ENCODE measurements at regions of chr3 and their contacts with region 1.

Region 1: GRCh38 chr3:122942937-122943827 is 84.4 kb downstream of the SEMA5B start:
- DNase-seq: peak; percentile 74 to 78 (median 77)
- ATAC-seq: peak; percentile 74 to 91 (median 86)
- H3K4me3 ChIP-seq: no peak overlapping the region
- H3K27ac ChIP-seq: peak overlapping the region in 4 of 12 donors; percentile 4 to 42 (median 13)
- H3K4me1 ChIP-seq: peaks cover 0 to 46% (median 23%) of the 10 kb centered on the region in 12 donors
- H3K27me3 ChIP-seq: no peaks in the 10 kb centered on the region
- CTCF ChIP-seq: peak; percentile 77 to 92 (median 87)
- POLR2A ChIP-seq: no peak

Region 2: DNA sequence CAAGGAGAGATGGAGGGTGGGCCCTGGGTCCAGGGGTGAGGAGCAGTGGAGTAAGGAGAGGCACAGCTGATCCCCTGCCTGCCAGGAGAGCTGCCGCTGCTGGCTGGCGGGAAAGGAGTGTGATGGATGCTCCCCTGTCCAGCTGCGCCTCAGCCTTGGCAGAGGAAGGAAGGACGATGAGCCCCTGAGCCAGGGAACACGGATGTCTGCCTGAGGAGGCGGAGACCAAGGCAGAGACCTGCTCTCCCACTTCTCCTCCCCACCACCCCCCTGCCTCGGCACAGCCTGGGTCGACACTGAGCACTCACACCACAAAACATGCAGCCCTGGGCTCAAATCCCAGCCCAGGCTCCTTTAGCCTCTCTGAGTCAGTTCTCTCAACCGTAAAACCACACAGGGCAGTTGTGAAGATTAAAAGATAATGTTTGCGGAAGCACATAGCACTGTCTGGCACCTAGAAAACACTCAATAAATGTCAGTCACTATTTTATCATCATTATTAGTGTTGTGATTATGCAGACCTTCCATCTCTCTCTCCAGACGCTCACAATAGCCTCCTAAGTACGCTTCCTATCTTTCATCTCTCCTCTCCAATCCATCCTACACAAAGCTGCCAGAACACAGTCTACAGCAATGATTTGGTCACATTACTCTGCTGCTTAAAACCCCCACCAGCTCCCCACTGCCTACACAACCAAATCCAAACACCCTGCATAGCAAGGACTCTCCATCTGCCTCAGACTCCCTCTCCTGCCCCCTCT is 32.2 kb after region 1 on chr3:
- intact Hi-C with region 1: loop called in 5 of 10 experiments (anchors 5 kb)
- DNase-seq: peak in 2 of 5 donors; percentile 1 to 45
- ATAC-seq: peak in 3 of 4 donors; percentile 2 to 16 (median 3)
- H3K4me3 ChIP-seq: no peak overlapping the region
- H3K27ac ChIP-seq: peak overlapping the region; percentile 20 to 98 (median 90)
- H3K4me1 ChIP-seq: peaks cover 0 to 83% (median 55%) of the 10 kb centered on the region in 12 donors
- H3K27me3 ChIP-seq: no peaks in the 10 kb centered on the region
- CTCF ChIP-seq: no peak
- POLR2A ChIP-seq: no peak

Region 3: GRCh38 chr3:122982216-122983185 is 39.3 kb after region 1 on chr3:
- intact Hi-C with region 1: loop called in 5 of 10 experiments (anchors 5 kb)
- DNase-seq: peak in 3 of 5 donors; percentile 51 to 65 (median 56)
- ATAC-seq: peak in 3 of 4 donors; percentile 3 to 36 (median 30)
- H3K4me3 ChIP-seq: no peak overlapping the region
- H3K27ac ChIP-seq: peak overlapping the region in 2 of 12 donors; percentile 3 to 10
- H3K4me1 ChIP-seq: peaks cover 0 to 53% (median 31%) of the 10 kb centered on the region in 12 donors
- H3K27me3 ChIP-seq: no peaks in the 10 kb centered on the region
- CTCF ChIP-seq: peak in 3 of 12 donors; percentile 24 to 33 (median 25)
- POLR2A ChIP-seq: no peak

Region 4: DNA sequence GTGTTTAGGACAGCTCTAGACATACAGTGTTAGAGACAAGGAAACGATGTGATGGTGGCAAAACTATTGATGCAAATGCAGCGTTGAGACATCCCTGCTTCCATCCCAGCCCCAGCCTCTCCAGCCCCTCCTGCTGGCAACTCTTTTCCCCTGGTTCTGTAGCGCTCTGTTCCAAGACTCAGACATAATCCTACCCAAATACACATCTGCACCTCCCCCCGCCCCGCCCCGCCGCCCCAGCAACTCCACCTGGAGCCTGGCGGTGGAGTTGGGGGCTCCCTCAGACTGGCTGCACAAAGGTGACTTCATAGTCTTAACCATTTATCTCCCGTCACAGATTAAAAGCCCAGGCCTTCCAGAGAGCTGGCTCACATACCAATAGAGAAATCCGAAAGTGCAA is 251.4 kb after region 1 on chr3:
- intact Hi-C with region 1: loop called in 1 of 10 experiments (anchors 10 kb)
- DNase-seq: peak in 1 of 5 donors; percentile 16
- ATAC-seq: peak in 2 of 4 donors; percentile 39 to 41
- H3K4me3 ChIP-seq: no peak overlapping the region
- H3K27ac ChIP-seq: no peak overlapping the region
- H3K4me1 ChIP-seq: peaks cover 0 to 8% (median 0%) of the 10 kb centered on the region in 12 donors
- H3K27me3 ChIP-seq: no peaks in the 10 kb centered on the region
- CTCF ChIP-seq: peak in 8 of 12 donors; percentile 8 to 47 (median 24)
- POLR2A ChIP-seq: no peak

Region 5: GRCh38 chr3:123258811-123259420 is 315.7 kb after region 1 on chr3:
- intact Hi-C with region 1: loop called in 9 of 10 experiments (anchors 2 to 5 kb)
- DNase-seq: no peak
- ATAC-seq: peak in 3 of 4 donors; percentile 22 to 58 (median 56)
- H3K4me3 ChIP-seq: no peak overlapping the region
- H3K27ac ChIP-seq: no peak overlapping the region
- H3K4me1 ChIP-seq: peaks cover 0 to 12% (median 0%) of the 10 kb centered on the region in 12 donors
- H3K27me3 ChIP-seq: no peaks in the 10 kb centered on the region
- CTCF ChIP-seq: peak; percentile 33 to 73 (median 57)
- POLR2A ChIP-seq: no peak

Region 6: GRCh38 chr3:123559040-123559861 is 616.1 kb after region 1 on chr3:
- intact Hi-C with region 1: loop called in 3 of 10 experiments (anchors 5 to 10 kb)
- DNase-seq: no peak
- ATAC-seq: peak in 2 of 4 donors; percentile 41
- H3K4me3 ChIP-seq: no peak overlapping the region
- H3K27ac ChIP-seq: no peak overlapping the region
- H3K4me1 ChIP-seq: peaks cover 0 to 5% (median 0%) of the 10 kb centered on the region in 12 donors
- H3K27me3 ChIP-seq: no peaks in the 10 kb centered on the region
- CTCF ChIP-seq: peak; percentile 78 to 95 (median 84)
- POLR2A ChIP-seq: no peak